ENCODE measurements at regions of chr1 and their contacts with region 1.

Region 1: DNA sequence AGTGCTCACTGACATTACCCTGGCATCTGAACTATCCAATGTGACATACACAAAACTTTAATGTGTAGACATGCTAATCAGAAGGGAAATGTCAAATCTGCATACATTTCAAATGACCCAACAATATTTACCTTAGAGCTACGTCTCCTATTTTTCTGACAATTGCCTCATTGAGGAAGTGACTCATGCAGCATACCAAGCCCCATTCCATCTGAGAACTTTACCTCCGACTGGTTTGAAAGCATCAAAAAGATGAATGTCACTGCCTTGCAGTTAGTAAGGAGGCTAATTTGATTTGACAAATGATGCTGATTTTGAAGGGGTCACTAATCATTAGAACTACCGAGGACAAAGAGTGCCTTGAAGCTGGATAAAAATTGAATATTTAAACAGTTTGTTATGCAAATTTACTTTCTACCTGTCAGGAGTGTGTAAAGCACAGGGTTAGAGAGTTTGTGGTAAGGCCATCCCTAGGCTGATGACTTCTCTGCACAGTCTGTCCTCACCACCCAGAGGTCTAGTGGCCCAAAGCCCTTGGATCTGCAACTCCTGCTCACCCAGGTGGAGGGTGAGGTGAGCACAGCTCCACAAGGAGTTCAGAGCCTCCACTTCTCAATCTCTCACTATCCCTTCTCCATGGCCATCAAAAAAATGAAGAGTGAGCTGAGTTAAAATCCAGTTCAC is 500.3 kb upstream of the C1orf87 start:
- DNase-seq: peak in 1 of 2 donors; percentile 67
- H3K4me3 ChIP-seq: no peak overlapping the region
- H3K27ac ChIP-seq: peak overlapping the region; percentile 58 to 71
- H3K4me1 ChIP-seq: peaks cover 3 to 22% of the 10 kb centered on the region in 2 donors
- H3K27me3 ChIP-seq: no peaks in the 10 kb centered on the region
- CTCF ChIP-seq: no peak

Region 2: DNA sequence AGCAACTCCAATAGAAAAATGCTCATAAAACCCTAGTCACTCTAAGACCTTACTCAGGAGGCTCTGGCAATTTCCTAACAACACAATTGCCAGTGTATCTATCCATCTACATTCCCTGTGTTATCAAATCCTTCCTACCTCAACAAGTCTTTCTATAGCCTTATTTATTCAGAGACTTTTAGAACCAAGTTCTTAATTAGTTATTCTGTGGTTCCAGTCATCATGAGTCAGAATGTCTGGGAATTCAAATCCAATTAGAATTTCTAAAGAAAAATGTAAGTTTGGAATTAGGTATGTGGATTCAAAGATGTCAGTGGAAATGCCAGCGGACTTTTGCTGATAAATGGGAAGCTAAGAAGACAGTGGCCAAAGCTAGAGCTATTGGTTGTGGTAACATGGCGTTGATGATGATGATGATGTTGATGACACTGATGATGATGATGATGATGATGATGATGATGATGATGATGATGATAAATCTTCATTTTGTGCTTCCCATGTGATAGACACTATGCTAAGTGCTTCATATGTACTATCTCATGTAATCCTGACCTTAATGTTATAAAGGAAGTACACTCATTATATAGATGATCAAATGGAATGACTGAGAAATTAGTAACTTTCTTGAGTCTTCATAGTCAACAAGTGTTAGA is 197.5 kb before region 1 on chr1:
- intact Hi-C with region 1: no loop called
- DNase-seq: no peak
- H3K4me3 ChIP-seq: no peak overlapping the region
- H3K27ac ChIP-seq: no peak overlapping the region
- H3K4me1 ChIP-seq: no peaks in the 10 kb centered on the region
- H3K27me3 ChIP-seq: no peaks in the 10 kb centered on the region
- CTCF ChIP-seq: no peak

Region 3: DNA sequence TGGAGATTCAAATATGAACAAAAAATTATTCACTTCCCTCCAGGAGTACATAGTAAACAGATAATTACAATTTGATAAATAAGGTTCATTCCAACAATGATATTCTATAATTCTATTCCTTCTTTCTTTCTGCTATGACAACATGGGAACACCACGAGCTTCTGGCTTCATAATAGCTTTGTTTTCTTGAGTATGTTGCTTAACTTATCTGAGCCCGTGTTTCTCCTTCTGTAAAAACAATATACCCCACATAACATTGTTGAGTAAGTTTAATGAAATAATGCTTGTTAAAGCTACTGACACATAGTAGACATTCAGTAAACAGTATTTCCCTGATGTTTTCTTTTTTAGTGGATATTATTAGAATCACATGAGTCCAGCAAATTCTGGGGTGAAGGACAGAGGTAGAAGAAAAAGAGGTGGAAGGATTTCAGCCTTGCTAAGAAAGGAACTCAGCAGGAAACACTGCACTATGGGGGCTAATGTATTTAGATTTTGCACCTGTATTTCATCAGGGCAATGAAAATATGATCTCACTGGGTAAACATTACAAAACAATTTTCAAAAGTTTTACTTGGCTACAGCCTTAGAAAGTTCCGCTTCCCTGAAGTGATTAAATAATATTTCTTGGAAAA is 69.5 kb before region 1 on chr1:
- intact Hi-C with region 1: loop called (anchors 2 kb)
- DNase-seq: no peak
- H3K4me3 ChIP-seq: no peak overlapping the region
- H3K27ac ChIP-seq: no peak overlapping the region
- H3K4me1 ChIP-seq: peaks cover 0 to 2% of the 10 kb centered on the region in 2 donors
- H3K27me3 ChIP-seq: no peaks in the 10 kb centered on the region
- CTCF ChIP-seq: no peak

Region 4: GRCh38 chr1:60558236-60558635 is 15.6 kb before region 1 on chr1:
- intact Hi-C with region 1: no loop called
- DNase-seq: no peak
- H3K4me3 ChIP-seq: no peak overlapping the region
- H3K27ac ChIP-seq: no peak overlapping the region
- H3K4me1 ChIP-seq: peaks cover 0 to 4% of the 10 kb centered on the region in 2 donors
- H3K27me3 ChIP-seq: no peaks in the 10 kb centered on the region
- CTCF ChIP-seq: no peak

Measured in ascending aorta (tissue), 2 donors.